ENCODE measurements at regions of chr6 and their contacts with region 1.

Region 1: DNA sequence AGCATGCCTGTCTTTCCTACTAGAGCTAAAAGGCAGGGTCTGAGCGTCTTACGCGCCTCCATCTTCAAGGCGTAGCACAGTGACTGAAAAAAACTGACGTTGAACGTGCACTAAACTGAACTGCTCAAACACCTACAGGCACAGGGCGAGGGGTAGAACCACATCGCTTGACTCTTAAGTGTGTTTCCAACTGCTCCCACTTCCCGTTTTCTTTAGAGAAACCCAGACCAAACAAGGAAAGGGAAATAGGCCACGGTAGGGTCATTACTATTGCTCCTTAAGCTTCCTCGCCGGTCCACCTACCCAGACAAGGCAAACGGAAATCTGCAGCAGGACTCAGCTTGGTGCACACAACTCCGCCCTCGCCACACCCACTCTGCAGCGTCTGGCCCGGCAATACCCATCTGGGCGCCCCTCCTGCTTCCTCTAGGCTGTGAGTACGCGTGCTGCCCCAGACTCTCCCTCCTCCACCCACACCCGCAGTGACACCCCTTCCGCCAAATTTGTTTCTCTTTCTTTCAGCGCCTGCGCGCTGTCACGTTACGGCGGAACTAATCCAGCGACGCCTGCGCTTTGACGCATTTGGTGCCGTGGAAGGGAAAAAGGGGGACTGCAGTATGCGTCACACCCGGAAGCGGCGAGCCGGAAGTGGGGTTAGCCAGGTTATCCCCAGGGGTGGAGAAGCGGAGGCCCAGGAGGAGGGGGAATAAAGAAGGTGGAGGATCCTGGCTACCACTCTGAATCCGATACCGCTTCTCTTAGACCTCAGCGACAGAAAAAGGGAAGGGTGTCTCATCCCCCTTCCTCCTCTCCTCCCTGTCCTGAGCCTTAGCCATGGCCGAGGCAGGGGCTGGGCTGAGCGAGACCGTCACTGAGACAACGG is at the start of gene PPP1R11:
- DNase-seq: peak; percentile 97 to 99
- ATAC-seq: peak; percentile 94 to 100 (median 95)
- H3K4me3 ChIP-seq: peak within 1 kb of the TSS; percentile 87
- H3K4me3 Mint-ChIP-seq: peak within 1 kb of the TSS; percentile 98
- H3K27ac ChIP-seq: peak within 1 kb of the TSS; percentile 99
- H3K27ac Mint-ChIP-seq: peak within 1 kb of the TSS; percentile 98 to 100
- H3K4me1 ChIP-seq: peaks cover 34% of the 10 kb centered on the region
- H3K4me1 Mint-ChIP-seq: peaks cover 49 to 64% of the 10 kb centered on the region in 2 donors
- H3K27me3 ChIP-seq: peaks cover 3% of the 10 kb centered on the region
- H3K27me3 Mint-ChIP-seq: peaks cover 6 to 12% of the 10 kb centered on the region in 2 donors
- CTCF ChIP-seq: no peak
- total RNA-seq, gene PPP1R11: 52.9 to 75.3 (median 61.1) TPM

Region 2: GRCh38 chr6:29747688-29748250 is 319.0 kb before region 1 on chr6:
- intact Hi-C with region 1: no loop called
- DNase-seq: no peak
- ATAC-seq: no peak
- H3K4me3 ChIP-seq: peak overlapping the region; percentile 47
- H3K4me3 Mint-ChIP-seq: peak overlapping the region; percentile 99
- H3K27ac ChIP-seq: no peak overlapping the region
- H3K27ac Mint-ChIP-seq: peak overlapping the region; percentile 74 to 96
- H3K4me1 ChIP-seq: peaks cover 29% of the 10 kb centered on the region
- H3K4me1 Mint-ChIP-seq: peaks cover 45 to 65% of the 10 kb centered on the region in 2 donors
- H3K27me3 ChIP-seq: no peaks in the 10 kb centered on the region
- H3K27me3 Mint-ChIP-seq: no peaks in the 10 kb centered on the region
- CTCF ChIP-seq: no peak

Region 3: DNA sequence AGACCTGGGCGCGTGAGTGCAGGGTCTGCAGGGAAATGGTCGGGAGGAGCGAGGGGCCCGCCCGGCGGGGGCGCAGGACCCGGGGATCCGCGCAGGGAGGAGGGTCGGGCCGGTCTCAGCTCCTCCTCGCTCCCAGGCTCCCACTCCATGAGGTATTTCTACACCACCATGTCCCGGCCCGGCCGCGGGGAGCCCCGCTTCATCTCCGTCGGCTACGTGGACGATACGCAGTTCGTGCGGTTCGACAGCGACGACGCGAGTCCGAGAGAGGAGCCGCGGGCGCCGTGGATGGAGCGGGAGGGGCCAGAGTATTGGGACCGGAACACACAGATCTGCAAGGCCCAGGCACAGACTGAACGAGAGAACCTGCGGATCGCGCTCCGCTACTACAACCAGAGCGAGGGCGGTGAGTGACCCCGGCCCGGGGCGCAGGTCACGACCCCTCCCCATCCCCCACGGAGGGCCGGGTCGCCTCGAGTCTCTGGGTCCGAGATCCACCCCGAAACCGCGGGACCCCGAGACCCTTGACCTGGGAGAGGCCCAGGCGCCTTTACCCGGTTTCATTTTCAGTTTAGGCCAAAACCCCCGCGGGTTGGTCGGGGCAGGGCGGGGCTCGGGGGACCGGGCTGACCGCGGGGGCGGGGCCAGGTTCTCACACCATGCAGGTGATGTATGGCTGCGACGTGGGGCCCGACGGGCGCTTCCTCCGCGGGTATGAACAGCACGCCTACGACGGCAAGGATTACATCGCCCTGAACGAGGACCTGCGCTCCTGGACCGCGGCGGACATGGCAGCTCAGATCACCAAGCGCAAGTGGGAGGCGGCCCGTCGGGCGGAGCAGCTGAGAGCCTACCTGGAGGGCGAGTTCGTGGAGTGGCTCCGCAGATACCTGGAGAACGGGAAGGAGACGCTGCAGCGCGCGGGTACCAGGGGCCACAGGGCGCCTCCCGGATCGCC is 178.7 kb before region 1 on chr6:
- intact Hi-C with region 1: loop called (anchors 5 kb)
- DNase-seq: peak; percentile 90 to 92
- ATAC-seq: peak; percentile 75 to 91 (median 77)
- H3K4me3 ChIP-seq: peak overlapping the region; percentile 92
- H3K4me3 Mint-ChIP-seq: peak overlapping the region; percentile 94
- H3K27ac ChIP-seq: peak overlapping the region; percentile 97
- H3K27ac Mint-ChIP-seq: peak overlapping the region; percentile 94 to 99
- H3K4me1 ChIP-seq: peaks cover 19% of the 10 kb centered on the region
- H3K4me1 Mint-ChIP-seq: peaks cover 12 to 30% of the 10 kb centered on the region in 2 donors
- H3K27me3 ChIP-seq: no peaks in the 10 kb centered on the region
- H3K27me3 Mint-ChIP-seq: no peaks in the 10 kb centered on the region
- CTCF ChIP-seq: no peak

Region 4: GRCh38 chr6:30212865-30213666 is 146.2 kb after region 1 on chr6 and contains the start of gene TRIM26:
- intact Hi-C with region 1: loop called (anchors 5 kb)
- DNase-seq: peak; percentile 95 to 98
- ATAC-seq: peak; percentile 83 to 92 (median 88)
- H3K4me3 ChIP-seq: peak within 1 kb of the TSS; percentile 93
- H3K4me3 Mint-ChIP-seq: peak within 1 kb of the TSS; percentile 97
- H3K27ac ChIP-seq: peak within 1 kb of the TSS; percentile 97
- H3K27ac Mint-ChIP-seq: peak within 1 kb of the TSS; percentile 99 to 100
- H3K4me1 ChIP-seq: peaks cover 17% of the 10 kb centered on the region
- H3K4me1 Mint-ChIP-seq: peaks cover 61 to 71% of the 10 kb centered on the region in 2 donors
- H3K27me3 ChIP-seq: no peaks in the 10 kb centered on the region
- H3K27me3 Mint-ChIP-seq: no peaks in the 10 kb centered on the region
- CTCF ChIP-seq: no peak
- total RNA-seq, gene TRIM26: 69.3 to 73.7 (median 71.6) TPM

Region 5: GRCh38 chr6:30326526-30327260 is 259.9 kb after region 1 on chr6 and contains the start of gene TRIM39:
- intact Hi-C with region 1: loop called (anchors 2 kb)
- DNase-seq: peak; percentile 87 to 96
- ATAC-seq: peak; percentile 55 to 78 (median 64)
- H3K4me3 ChIP-seq: peak within 1 kb of the TSS; percentile 88
- H3K4me3 Mint-ChIP-seq: peak within 1 kb of the TSS; percentile 99
- H3K27ac ChIP-seq: peak within 1 kb of the TSS; percentile 85
- H3K27ac Mint-ChIP-seq: peak within 1 kb of the TSS; percentile 98 to 99
- H3K4me1 ChIP-seq: peaks cover 37% of the 10 kb centered on the region
- H3K4me1 Mint-ChIP-seq: peaks cover 43 to 59% of the 10 kb centered on the region in 2 donors
- H3K27me3 ChIP-seq: no peaks in the 10 kb centered on the region
- H3K27me3 Mint-ChIP-seq: no peaks in the 10 kb centered on the region
- CTCF ChIP-seq: no peak
- total RNA-seq, gene TRIM39: 32.1 to 40.1 (median 38.5) TPM

Measured in natural killer cell (primary cell).